ENCODE measurements at regions of chr2 and their contacts with region 1.

Region 1: DNA sequence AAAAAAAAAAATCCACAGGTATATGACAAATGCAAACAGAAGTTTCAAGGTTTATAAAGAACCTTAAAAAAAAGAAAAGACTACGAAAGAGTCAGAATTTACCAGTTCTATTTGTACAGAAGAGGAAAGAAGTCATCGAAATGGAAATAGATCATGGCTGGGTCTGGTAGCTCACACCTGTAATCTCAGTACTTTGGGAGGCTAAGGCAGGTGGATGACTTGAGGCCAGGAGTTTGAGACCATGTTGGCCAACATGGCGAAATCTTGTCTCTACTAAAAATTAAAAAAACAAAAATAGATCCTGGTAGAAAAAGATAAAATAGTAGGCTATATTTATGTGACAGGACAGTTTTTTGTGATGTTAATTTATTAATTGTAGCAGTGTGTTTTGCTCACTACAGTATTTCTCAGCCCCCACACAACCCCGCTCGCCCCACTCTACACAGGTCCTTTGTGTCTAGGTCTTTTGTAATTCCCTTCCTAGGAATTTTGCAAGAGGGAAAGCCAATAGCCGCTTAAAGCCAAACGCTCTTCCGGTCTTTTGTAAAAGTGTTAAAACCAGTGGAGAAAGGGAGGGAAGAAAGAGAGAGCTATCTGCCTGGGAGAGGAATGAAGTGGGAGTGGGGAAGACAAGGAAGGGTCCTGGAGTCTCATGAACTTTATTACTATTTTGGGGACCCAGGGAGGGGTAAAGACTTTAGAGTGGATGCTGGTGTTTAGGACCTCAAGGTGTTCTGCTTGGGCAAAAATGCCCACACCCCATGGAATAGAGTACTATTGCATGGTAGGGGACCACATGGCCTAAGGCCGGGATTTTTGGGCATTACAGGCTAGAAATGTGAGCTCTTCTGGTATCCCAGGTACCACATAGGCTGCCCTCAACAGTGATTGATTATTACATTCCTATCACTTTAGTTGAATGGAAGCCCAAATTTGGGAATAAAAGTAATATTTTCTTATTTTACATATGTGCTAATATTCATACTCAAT is 59.4 kb upstream of the XPO1 start:
- DNase-seq: peak; percentile 41 to 50
- H3K4me3 ChIP-seq: no peak overlapping the region
- H3K27ac ChIP-seq: peak overlapping the region; percentile 55
- H3K4me1 ChIP-seq: peaks cover 0 to 12% (median 5%) of the 10 kb centered on the region in 4 experiments; a peak in 4 of 7 replicates
- H3K27me3 ChIP-seq: no peaks in the 10 kb centered on the region
- CTCF ChIP-seq: no peak
- EP300 ChIP-seq: peak in 1 of 2 experiments; percentile 40; a peak in 1 of 3 replicates
- POLR2A ChIP-seq: 0 out of 3 replicates have a peak, but pooled peaks of 1 of the 2 experiments have one; percentile 18
- RAD21 ChIP-seq: no peak

Region 2: DNA sequence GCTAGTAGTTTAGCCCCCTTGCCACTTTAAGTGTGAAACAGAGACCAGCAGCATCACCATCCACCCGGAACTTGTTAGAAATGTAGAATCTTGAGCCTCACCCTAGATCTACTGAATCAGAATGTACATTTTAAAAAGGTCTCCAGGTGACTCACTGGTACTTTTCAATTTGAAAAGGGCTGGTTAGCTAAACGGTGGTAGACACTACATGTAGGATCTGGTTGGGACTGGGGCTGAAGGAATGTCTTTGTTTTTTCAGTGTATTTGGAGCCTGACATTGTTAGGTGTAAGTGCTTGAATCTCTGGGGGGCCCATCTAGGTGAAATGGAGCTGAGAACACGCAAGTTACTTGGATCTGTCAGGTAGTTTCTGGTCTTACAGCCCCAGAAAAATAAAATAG is 15.4 kb before region 1 on chr2:
- CTCF ChIA-PET with region 1: interaction called, 4 read pairs
- POLR2A ChIA-PET with region 1: interaction called, 13 read pairs
- DNase-seq: peak in 1 of 2 experiments; percentile 72
- H3K4me3 ChIP-seq: peak overlapping the region in 1 of 4 experiments; percentile 3; a peak in 2 of 8 replicates
- H3K27ac ChIP-seq: peak overlapping the region; percentile 11; the same call in 1 of the 2 replicates
- H3K4me1 ChIP-seq: peaks cover 0 to 13% (median 5%) of the 10 kb centered on the region in 4 experiments; a peak in 4 of 7 replicates
- H3K27me3 ChIP-seq: no peaks in the 10 kb centered on the region
- CTCF ChIP-seq: no peak
- EP300 ChIP-seq: peak in 1 of 2 experiments; percentile 79; a peak in 2 of 3 replicates
- POLR2A ChIP-seq: no peak; a peak in 1 of 3 replicates
- RAD21 ChIP-seq: peak in 1 of 2 experiments; percentile 10; a peak in 1 of 4 replicates

Region 3: DNA sequence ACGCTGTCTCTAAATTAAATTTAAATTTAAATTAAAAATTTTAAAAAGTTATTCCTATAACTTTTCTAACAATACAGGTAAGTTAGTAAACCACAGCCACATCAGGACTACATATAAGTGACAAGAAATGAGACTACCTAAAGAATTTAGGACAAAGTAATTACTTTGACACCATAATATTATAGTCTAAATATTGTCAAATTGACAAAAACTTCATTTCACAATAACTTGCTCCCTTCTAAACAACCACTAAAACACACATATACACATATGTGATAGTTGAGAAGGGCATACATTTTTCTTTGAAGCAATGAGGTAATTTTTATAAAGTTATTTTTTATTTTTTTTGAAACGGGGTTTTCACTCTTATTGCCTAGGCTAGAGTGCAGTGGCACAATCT is 224.7 kb after region 1 on chr2:
- CTCF ChIA-PET with region 1: no interaction called
- POLR2A ChIA-PET with region 1: no interaction called
- DNase-seq: no peak
- H3K4me3 ChIP-seq: no peak overlapping the region
- H3K27ac ChIP-seq: no peak overlapping the region
- H3K4me1 ChIP-seq: no peaks in the 10 kb centered on the region
- H3K27me3 ChIP-seq: no peaks in the 10 kb centered on the region
- CTCF ChIP-seq: no peak
- EP300 ChIP-seq: no peak
- POLR2A ChIP-seq: no peak
- RAD21 ChIP-seq: no peak

Measured in H1 (cell line).